CD4-positive, alpha-beta T cell (primary cell): ENCODE measurements at regions of chr20 and their contacts with region 1.

Region 1: GRCh38 chr20:5608442-5609161 is 141.6 kb upstream of the SHLD1 start:
- DNase-seq: peak in 3 of 14 experiments; percentile 39 to 47 (median 44)
- ATAC-seq: no peak
- H3K4me3 ChIP-seq: peak overlapping the region; percentile 99
- H3K4me3 Mint-ChIP-seq: peak overlapping the region; percentile 95
- H3K27ac ChIP-seq: peak overlapping the region; percentile 88 to 95
- H3K27ac Mint-ChIP-seq: peak overlapping the region; percentile 100
- H3K4me1 ChIP-seq: peaks cover 34% of the 10 kb centered on the region
- H3K4me1 Mint-ChIP-seq: peaks cover 61% of the 10 kb centered on the region
- H3K27me3 ChIP-seq: no peaks in the 10 kb centered on the region
- H3K27me3 Mint-ChIP-seq: no peaks in the 10 kb centered on the region
- CTCF ChIP-seq: no peak

Region 2: DNA sequence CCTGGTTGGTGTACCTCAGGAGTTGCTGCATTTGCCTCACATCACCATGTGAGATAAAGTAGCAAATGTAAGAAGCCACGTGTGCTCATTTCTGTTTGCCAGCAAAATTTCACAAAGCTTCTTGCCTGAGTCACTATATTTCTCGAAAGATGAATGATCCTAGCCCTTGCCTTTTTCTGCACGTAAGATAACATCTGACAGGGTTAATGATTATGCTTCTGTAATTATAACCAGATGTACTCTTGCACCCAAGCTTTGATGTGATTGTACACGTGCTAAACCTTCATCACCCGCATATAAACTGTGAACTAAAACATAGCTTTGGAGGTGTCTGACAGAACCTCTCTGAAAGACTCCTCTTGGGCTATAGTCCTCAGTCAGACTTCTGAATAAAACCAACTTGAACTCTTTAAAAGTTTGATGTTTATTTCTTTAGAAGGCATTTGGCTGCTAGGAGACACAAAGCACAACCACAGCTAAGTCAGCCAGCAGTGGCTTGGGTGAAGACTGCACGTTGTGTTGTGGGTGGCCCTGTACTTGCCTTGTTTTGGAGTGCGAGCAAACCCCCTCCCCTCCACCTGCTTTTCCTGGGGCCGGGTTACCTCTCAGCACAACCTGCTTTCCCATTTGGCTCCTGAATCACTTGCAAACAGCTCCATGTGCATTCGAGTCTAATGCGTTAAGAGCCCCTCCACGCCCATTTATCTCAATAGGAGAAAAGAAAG is 311.2 kb before region 1 on chr20:
- CTCF ChIA-PET with region 1: no interaction called
- POLR2A ChIA-PET with region 1: no interaction called
- intact Hi-C with region 1: no loop called
- DNase-seq: no peak
- ATAC-seq: no peak
- H3K4me3 ChIP-seq: no peak overlapping the region
- H3K4me3 Mint-ChIP-seq: no peak overlapping the region
- H3K27ac ChIP-seq: no peak overlapping the region
- H3K27ac Mint-ChIP-seq: no peak overlapping the region
- H3K4me1 ChIP-seq: no peaks in the 10 kb centered on the region
- H3K4me1 Mint-ChIP-seq: no peaks in the 10 kb centered on the region
- H3K27me3 ChIP-seq: peaks cover 8 to 17% of the 10 kb centered on the region in 2 experiments
- H3K27me3 Mint-ChIP-seq: peaks cover 63% of the 10 kb centered on the region
- CTCF ChIP-seq: no peak

Region 3: GRCh38 chr20:5592823-5593739 is 15.5 kb before region 1 on chr20:
- CTCF ChIA-PET with region 1: interaction called, 10 read pairs
- POLR2A ChIA-PET with region 1: interaction called, 11 read pairs
- intact Hi-C with region 1: no loop called
- DNase-seq: peak in 2 of 14 experiments; percentile 22 to 59
- ATAC-seq: peak; percentile 66
- H3K4me3 ChIP-seq: peak overlapping the region; percentile 28
- H3K4me3 Mint-ChIP-seq: peak overlapping the region; percentile 69
- H3K27ac ChIP-seq: peak overlapping the region; percentile 52 to 62
- H3K27ac Mint-ChIP-seq: peak overlapping the region; percentile 77
- H3K4me1 ChIP-seq: peaks cover 30% of the 10 kb centered on the region
- H3K4me1 Mint-ChIP-seq: peaks cover 82% of the 10 kb centered on the region
- H3K27me3 ChIP-seq: no peaks in the 10 kb centered on the region
- H3K27me3 Mint-ChIP-seq: no peaks in the 10 kb centered on the region
- CTCF ChIP-seq: no peak

Region 4: DNA sequence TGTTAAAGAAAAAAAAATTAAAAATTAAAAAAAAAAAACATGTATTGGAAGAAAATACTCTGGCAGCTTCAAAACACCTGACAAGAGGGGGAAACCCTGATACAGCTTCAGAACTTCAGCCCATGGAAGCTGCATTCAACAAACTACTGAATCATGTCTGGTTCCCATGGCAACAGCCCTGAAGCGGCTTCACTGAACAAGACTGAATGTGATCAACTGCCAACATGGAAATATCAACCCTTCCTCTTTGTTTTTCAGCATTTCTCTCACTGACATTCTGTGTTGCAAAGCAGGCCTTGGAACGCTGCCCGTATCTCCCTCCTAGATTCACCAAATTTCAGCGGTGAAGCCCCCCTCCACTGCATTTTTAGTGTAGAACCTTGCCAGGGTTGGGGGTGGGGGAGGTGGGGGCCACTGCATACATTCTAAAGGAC is 50.3 kb after region 1 on chr20:
- CTCF ChIA-PET with region 1: no interaction called
- POLR2A ChIA-PET with region 1: interaction called, 3 read pairs
- intact Hi-C with region 1: loop called in 1 of 2 experiments (anchors 5 kb)
- DNase-seq: peak in 12 of 14 experiments; percentile 14 to 87 (median 35)
- ATAC-seq: peak; percentile 95
- H3K4me3 ChIP-seq: no peak overlapping the region
- H3K4me3 Mint-ChIP-seq: no peak overlapping the region
- H3K27ac ChIP-seq: no peak overlapping the region
- H3K27ac Mint-ChIP-seq: peak overlapping the region; percentile 18
- H3K4me1 ChIP-seq: peaks cover 11% of the 10 kb centered on the region
- H3K4me1 Mint-ChIP-seq: peaks cover 12% of the 10 kb centered on the region
- H3K27me3 ChIP-seq: no peaks in the 10 kb centered on the region
- H3K27me3 Mint-ChIP-seq: no peaks in the 10 kb centered on the region
- CTCF ChIP-seq: no peak